ENCODE measurements at regions of chr22 and their contacts with region 1.

Region 1: GRCh38 chr22:38981992-38982927 is at the start of gene APOBEC3B:
- DNase-seq: peak in 1 of 2 donors; percentile 84
- H3K4me3 ChIP-seq: peak within 1 kb of the TSS in 2 of 3 donors; percentile 46 to 65
- H3K27ac ChIP-seq: peak within 1 kb of the TSS in 1 of 2 donors; percentile 82
- H3K4me1 ChIP-seq: peaks cover 0 to 4% of the 10 kb centered on the region in 2 donors
- H3K27me3 ChIP-seq: no peaks in the 10 kb centered on the region
- CTCF ChIP-seq: no peak
- POLR2A ChIP-seq: no peak
- total RNA-seq, gene APOBEC3B: 0.33 to 2.2 TPM in 2 of 3 donors, not detected in the other

Region 2: GRCh38 chr22:38872172-38872830 is 110.0 kb before region 1 on chr22 and contains the start of gene CBX6:
- intact Hi-C with region 1: loop called (anchors 10 kb)
- DNase-seq: peak; percentile 90 to 95
- H3K4me3 ChIP-seq: peak within 1 kb of the TSS; percentile 75 to 99 (median 76)
- H3K27ac ChIP-seq: peak within 1 kb of the TSS; percentile 96 to 97
- H3K4me1 ChIP-seq: peaks cover 0 to 10% of the 10 kb centered on the region in 2 donors
- H3K27me3 ChIP-seq: no peaks in the 10 kb centered on the region
- CTCF ChIP-seq: no peak
- POLR2A ChIP-seq: peak; percentile 26
- total RNA-seq, gene CBX6: 20.2 to 34.7 (median 25.9) TPM

Measured in breast epithelium (tissue), 4 donors.